ENCODE measurements at regions of chr2 and their contacts with region 1.

Region 1: GRCh38 chr2:38508311-38509039 is 94.3 kb downstream of the HNRNPLL start:
- DNase-seq: peak; percentile 74
- H3K4me3 ChIP-seq: no peak overlapping the region; a peak in 1 of 4 replicates
- H3K27ac ChIP-seq: peak overlapping the region; percentile 58 to 66
- H3K4me1 ChIP-seq: peaks cover 17 to 18% of the 10 kb centered on the region in 2 experiments; a peak in 3 of 4 replicates
- H3K27me3 ChIP-seq: no peaks in the 10 kb centered on the region
- CTCF ChIP-seq: peak; percentile 67
- EP300 ChIP-seq: 0 out of 4 replicates have a peak, but pooled peaks of 1 of the 2 experiments have one; percentile 9
- RAD21 ChIP-seq: peak; percentile 92

Region 2: DNA sequence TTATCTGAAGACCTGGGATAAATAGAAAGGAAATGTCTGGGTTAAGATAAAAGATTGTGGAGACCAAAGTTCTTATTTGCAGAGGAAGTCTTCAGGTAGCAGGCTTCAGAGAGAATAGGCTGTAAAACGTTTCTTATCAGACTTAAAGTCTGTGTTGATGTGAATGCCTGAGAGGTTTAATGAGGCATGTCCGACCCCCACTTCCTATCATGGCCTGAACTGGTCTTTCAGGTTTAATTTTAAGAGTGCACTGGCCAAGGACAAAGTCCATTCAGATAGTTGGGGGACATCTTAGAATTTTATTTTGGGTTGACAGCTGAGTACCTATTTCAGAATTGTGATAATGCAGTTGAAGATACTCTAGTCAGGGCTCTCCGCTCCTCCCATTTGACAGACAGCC is 223.5 kb before region 1 on chr2:
- CTCF ChIA-PET with region 1: interaction called, 13 read pairs
- POLR2A ChIA-PET with region 1: no interaction called
- DNase-seq: no peak
- H3K4me3 ChIP-seq: no peak overlapping the region
- H3K27ac ChIP-seq: no peak overlapping the region
- H3K4me1 ChIP-seq: no peaks in the 10 kb centered on the region
- H3K27me3 ChIP-seq: no peaks in the 10 kb centered on the region; the same call in 1 of the 2 replicates
- CTCF ChIP-seq: no peak
- EP300 ChIP-seq: no peak
- RAD21 ChIP-seq: no peak

Region 3: DNA sequence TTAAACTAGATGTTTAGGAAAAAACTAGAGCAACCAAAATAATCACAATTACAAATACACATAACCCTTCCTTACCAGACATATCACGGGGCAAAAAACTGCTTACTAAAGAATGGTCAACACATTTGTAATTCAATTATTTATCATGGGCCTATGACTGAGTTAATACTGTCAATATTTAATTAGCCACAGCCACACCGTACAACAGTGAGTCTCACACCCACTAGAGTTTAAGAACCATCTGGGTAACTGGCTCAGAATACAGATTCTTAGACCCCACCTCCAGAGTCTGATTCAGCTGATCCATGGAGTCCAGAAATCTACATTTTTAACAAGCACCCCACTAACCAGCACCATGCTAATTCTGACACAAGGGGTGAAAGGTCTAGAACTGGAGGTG is 146.2 kb before region 1 on chr2:
- CTCF ChIA-PET with region 1: interaction called, 13 read pairs
- POLR2A ChIA-PET with region 1: no interaction called
- DNase-seq: no peak
- H3K4me3 ChIP-seq: no peak overlapping the region
- H3K27ac ChIP-seq: peak overlapping the region in 1 of 2 experiments; percentile 24; a peak in 1 of 4 replicates
- H3K4me1 ChIP-seq: peaks cover 2 to 9% of the 10 kb centered on the region in 2 experiments; a peak in 3 of 4 replicates
- H3K27me3 ChIP-seq: no peaks in the 10 kb centered on the region
- CTCF ChIP-seq: no peak
- EP300 ChIP-seq: no peak
- RAD21 ChIP-seq: no peak

Region 4: GRCh38 chr2:38460313-38460712 is 48.2 kb before region 1 on chr2:
- CTCF ChIA-PET with region 1: interaction called, 10 read pairs
- POLR2A ChIA-PET with region 1: no interaction called
- DNase-seq: no peak
- H3K4me3 ChIP-seq: no peak overlapping the region
- H3K27ac ChIP-seq: no peak overlapping the region
- H3K4me1 ChIP-seq: peaks cover 0 to 13% of the 10 kb centered on the region in 2 experiments; a peak in 2 of 4 replicates
- H3K27me3 ChIP-seq: no peaks in the 10 kb centered on the region
- CTCF ChIP-seq: no peak
- EP300 ChIP-seq: no peak
- RAD21 ChIP-seq: no peak

Region 5: DNA sequence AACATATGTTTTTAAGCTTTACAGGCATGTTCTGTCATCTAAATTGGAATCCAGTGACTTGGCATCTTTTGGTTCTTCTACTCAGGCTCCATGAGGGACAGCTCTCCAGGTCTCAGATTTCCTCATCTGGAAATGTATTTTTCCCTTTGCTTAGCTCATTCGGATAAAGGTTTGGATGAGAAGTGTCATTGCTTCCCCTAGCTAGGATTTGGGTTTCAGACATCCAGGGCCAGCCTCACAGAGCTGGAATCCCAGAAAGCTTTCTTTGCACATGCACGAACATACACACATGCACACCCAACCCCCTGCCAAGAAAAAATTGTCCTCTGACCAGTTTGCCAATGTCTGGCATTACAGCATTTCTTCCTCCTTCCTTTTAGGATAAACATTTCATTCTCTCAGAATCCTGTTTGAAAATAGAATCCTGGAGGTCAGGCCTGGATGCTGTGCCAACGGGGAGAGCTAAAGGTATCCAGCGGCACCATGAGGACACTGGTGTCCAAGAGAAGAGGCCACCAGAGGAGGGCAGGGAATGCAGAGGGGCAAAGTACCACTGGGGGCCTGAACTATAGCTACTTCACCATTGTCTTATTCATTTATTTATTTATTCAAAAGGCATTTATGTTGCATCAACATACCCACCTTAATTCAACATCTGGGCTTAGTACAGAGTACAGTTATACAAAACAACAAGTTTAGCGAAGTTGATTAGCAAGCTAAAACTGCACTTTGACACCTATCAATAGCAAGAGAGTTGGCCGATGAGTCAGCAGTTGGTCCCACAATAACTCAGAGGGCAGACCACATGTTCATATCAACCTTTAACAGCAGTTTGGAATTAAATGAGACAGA is 33.5 kb before region 1 on chr2:
- CTCF ChIA-PET with region 1: interaction called, 23 read pairs
- POLR2A ChIA-PET with region 1: no interaction called
- DNase-seq: no peak
- H3K4me3 ChIP-seq: no peak overlapping the region
- H3K27ac ChIP-seq: no peak overlapping the region
- H3K4me1 ChIP-seq: no peaks in the 10 kb centered on the region; a peak in 1 of 4 replicates
- H3K27me3 ChIP-seq: no peaks in the 10 kb centered on the region; the same call in 1 of the 2 replicates
- CTCF ChIP-seq: no peak
- EP300 ChIP-seq: no peak
- RAD21 ChIP-seq: no peak

Region 6: DNA sequence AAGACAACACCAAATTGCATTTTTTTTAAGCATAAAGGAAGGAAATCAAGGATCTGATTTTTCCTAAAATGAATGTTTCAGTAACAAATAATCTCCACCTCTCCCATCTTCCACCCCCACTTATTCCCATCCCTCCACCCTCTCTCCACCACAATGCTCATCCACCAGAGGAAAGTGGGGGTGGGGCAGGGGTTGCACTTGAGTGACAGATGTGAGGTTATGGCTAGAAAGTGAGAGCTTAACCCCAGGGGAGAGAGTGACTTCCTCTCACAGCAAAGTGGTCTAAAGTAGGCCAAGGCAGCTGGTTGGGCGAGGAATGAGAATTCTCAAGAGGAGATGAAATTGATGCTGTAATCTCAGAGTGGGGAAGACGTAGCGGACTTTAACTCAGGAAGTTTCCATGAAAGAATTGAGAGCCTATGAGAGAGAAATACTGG is 10.4 kb before region 1 on chr2:
- CTCF ChIA-PET with region 1: interaction called, 33 read pairs
- POLR2A ChIA-PET with region 1: no interaction called
- DNase-seq: no peak
- H3K4me3 ChIP-seq: no peak overlapping the region
- H3K27ac ChIP-seq: no peak overlapping the region
- H3K4me1 ChIP-seq: peaks cover 0 to 15% of the 10 kb centered on the region in 2 experiments; a peak in 1 of 4 replicates
- H3K27me3 ChIP-seq: no peaks in the 10 kb centered on the region; the same call in 1 of the 2 replicates
- CTCF ChIP-seq: no peak
- EP300 ChIP-seq: no peak
- RAD21 ChIP-seq: no peak

Region 7: GRCh38 chr2:38535744-38536506 is 27.4 kb after region 1 on chr2:
- CTCF ChIA-PET with region 1: interaction called, 18 read pairs
- POLR2A ChIA-PET with region 1: no interaction called
- DNase-seq: peak; percentile 97
- H3K4me3 ChIP-seq: peak overlapping the region; percentile 57 to 89
- H3K27ac ChIP-seq: no peak overlapping the region
- H3K4me1 ChIP-seq: peaks cover 0 to 3% of the 10 kb centered on the region in 2 experiments; a peak in 1 of 4 replicates
- H3K27me3 ChIP-seq: no peaks in the 10 kb centered on the region
- CTCF ChIP-seq: peak; percentile 93
- EP300 ChIP-seq: no peak
- RAD21 ChIP-seq: peak; percentile 84